AG04450 (cell line): ENCODE measurements at regions of chr20 and their contacts with region 1.

Region 1: GRCh38 chr20:45771182-45771759 is 20.4 kb downstream of the WFDC3 start:
- DNase-seq: peak; percentile 68
- H3K4me3 ChIP-seq: no peak overlapping the region
- H3K27ac ChIP-seq: peak overlapping the region; percentile 39
- H3K27me3 ChIP-seq: peaks cover 23% of the 10 kb centered on the region
- CTCF ChIP-seq: peak; percentile 95

Region 2: DNA sequence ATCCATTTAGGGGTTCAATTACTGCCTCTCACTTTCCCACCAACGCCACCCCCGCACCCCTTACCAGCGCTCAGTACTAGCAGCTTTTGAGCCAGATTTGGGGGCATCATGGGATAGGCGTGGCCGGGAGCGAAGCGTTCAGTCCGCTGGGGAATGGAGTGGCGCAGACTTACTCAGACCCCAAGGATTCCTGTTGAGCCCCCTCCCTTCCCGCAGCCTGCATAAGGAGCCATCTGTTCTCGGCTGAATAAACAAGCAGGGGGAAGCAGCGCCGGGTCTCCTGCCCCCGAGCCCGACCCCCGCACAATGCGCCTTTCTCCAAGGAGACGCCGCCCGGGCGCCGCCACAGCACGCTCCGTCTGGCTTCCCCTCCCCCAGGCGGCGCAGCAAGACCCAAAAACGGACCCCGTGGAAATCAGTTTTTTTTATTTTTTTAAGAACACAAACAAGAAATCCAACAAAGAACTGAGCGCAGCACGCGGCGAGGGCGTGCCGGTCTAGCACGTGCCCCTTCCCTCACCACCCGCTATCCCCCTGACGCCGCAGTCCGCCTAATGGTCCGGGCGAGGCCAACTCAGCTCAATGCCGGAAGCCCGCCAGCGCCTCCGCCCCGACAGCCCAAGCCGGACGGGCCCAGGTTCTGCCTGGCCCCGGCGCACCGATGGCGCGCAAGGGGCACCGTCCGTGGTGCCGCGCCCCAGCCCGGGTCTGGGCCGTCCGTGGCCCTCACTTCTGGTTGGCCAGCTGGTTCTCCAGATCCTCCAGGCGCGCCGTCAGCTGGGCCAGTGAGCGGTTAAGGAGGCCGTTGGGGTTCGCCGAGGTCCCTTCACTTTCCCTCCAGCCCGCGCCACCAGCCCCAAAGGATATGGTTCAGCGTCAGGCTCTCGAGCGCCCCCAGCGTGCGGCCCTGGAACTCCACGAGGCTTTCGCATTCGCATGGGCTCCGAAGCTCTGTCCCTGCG is 477.9 kb before region 1 on chr20:
- CTCF ChIA-PET with region 1: interaction called, 30 read pairs
- POLR2A ChIA-PET with region 1: no interaction called
- DNase-seq: no peak
- H3K4me3 ChIP-seq: peak overlapping the region; percentile 58
- H3K27ac ChIP-seq: no peak overlapping the region
- H3K27me3 ChIP-seq: peaks cover 19% of the 10 kb centered on the region
- CTCF ChIP-seq: peak; percentile 94

Region 3: GRCh38 chr20:45362804-45363610 is 408.3 kb before region 1 on chr20 and contains the start of gene SYS1:
- CTCF ChIA-PET with region 1: interaction called, 22 read pairs
- POLR2A ChIA-PET with region 1: no interaction called
- DNase-seq: peak; percentile 97
- H3K4me3 ChIP-seq: peak within 1 kb of the TSS; percentile 96
- H3K27ac ChIP-seq: peak within 1 kb of the TSS; percentile 97
- H3K27me3 ChIP-seq: no peaks in the 10 kb centered on the region
- CTCF ChIP-seq: peak; percentile 94
- polyA plus RNA-seq, gene SYS1: 25.1 and 33.4 TPM in 2 replicates

Region 4: GRCh38 chr20:45436732-45437391 is 334.4 kb before region 1 on chr20:
- CTCF ChIA-PET with region 1: interaction called, 50 read pairs
- POLR2A ChIA-PET with region 1: no interaction called
- DNase-seq: peak; percentile 62
- H3K4me3 ChIP-seq: peak overlapping the region; percentile 60
- H3K27ac ChIP-seq: no peak overlapping the region
- H3K27me3 ChIP-seq: peaks cover 7% of the 10 kb centered on the region
- CTCF ChIP-seq: peak; percentile 98

Region 5: DNA sequence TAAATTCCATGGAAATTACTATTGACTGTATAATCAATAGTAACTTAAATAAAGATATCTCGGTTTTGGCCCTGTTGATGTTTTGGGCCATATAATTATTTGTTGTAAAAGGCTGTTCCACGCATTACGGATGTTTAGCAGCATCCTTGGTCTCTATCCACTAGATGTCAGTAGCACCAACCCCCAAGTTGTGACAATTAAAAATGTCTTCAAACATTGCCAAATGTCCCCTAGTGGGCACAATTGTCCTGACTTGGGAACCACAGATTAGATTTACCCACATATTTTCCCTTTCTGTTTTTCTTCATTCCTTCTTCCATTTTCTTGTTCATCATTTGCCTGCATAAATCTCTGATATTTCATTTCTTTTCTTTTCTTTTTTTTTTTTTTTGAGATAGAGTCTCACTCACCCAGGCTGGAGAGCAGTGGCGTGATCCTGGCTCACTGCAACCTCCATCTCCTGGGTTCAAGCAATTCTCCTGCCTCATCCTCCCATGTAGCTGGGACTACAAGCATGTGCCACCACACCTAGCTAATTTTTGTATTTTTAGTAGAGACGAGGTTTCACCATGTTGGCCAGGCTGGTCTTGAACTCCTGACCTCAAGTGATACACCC is 178.6 kb before region 1 on chr20:
- CTCF ChIA-PET with region 1: interaction called, 14 read pairs
- POLR2A ChIA-PET with region 1: no interaction called
- DNase-seq: no peak
- H3K4me3 ChIP-seq: no peak overlapping the region
- H3K27ac ChIP-seq: no peak overlapping the region
- H3K27me3 ChIP-seq: peaks cover 4% of the 10 kb centered on the region
- CTCF ChIP-seq: peak; percentile 58

Region 6: GRCh38 chr20:45752746-45753145 is 18.5 kb before region 1 on chr20:
- CTCF ChIA-PET with region 1: interaction called, 16 read pairs
- POLR2A ChIA-PET with region 1: no interaction called
- DNase-seq: no peak
- H3K4me3 ChIP-seq: no peak overlapping the region
- H3K27ac ChIP-seq: no peak overlapping the region
- H3K27me3 ChIP-seq: no peaks in the 10 kb centered on the region
- CTCF ChIP-seq: no peak